KBM-7 (cell line): ENCODE measurements at regions of chr22 and their contacts with region 1.

Region 1: DNA sequence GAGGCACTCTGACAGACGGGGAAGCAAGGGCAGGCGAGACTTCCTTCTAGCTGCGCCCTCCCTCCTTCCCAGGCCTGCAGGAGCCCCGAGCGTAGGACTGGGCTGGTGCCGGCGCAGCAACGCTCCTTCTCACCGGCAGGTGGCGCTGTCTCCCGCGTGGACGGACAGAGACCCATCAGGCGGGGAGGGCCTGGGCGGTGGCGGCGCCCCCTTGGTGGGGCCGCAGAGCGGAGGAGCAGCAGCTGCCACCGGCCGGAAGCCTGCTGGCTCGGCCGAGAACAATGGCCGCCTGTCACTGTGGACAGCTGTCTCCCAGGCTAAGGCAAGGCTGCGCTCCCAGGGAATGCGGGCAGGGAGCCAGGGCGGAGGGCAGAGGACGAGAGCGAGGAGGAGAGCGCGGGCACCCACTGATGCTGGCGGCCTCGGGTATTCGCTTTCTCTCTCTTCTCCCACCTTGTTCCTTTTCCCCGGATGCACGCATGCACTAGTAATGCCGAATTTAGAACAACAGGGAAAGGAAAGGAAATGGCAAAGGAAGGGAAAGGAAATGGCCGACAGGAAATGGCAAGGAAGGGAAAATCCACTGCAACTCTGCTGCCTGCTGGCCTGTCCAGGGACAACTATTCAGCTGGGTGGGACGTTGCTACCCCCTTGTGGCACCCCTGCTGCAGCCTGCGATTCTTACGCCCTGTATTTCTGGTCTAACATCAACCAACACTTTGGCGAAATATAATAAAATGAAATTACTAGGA is 14.4 kb downstream of the PPM1F start:
- DNase-seq: peak; percentile 98

Region 2: GRCh38 chr22:21735200-21736076 is 202.8 kb before region 1 on chr22 and contains the start of gene YPEL1:
- in situ Hi-C with region 1: loop called (anchors 25 kb)
- DNase-seq: peak; percentile 89